ENCODE measurements at regions of chr11 and their contacts with region 1.

Region 1: DNA sequence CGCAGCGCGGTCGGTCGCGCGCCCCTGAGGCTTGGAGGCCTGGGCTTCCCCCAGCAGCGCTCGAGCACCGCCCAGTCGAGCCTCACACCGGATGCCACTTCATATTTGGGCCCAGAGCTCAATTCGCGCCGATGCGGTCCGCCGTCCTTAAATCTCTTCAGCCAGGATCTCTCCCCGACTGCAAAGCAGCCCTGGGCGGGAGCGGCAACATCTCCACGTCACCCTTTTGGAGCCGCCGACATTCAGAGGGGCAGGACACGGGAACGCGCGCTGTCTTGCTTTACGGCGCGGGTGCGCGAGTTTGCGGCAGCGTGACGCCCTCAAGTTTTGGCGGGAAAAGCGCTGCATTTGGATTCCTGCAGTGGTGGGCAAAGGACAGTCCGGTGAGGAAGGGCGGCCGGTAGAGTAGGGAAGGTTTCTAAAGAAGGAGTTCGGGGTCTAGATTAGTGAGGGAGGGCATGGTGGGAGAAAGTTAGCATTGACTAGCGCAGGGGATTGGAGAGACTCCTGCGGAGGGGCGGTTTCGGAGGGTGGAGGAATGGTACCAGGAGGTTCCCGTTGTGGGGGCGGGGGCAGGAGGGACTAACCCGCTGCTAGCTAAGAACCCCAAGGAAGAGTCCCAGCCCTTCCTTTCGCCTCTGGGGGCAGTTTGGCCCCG is 796 bp downstream of the CHEK1 start:
- DNase-seq: peak; percentile 77 to 97 (median 82)
- ATAC-seq: peak; percentile 89
- H3K4me3 ChIP-seq: peak overlapping the region; percentile 80
- H3K27ac ChIP-seq: peak overlapping the region; percentile 93
- H3K4me1 ChIP-seq: peaks cover 9 to 10% of the 10 kb centered on the region in 2 experiments
- H3K27me3 ChIP-seq: no peaks in the 10 kb centered on the region
- CTCF ChIP-seq: no peak
- EP300 ChIP-seq: no peak
- POLR2A ChIP-seq: peak; percentile 98
- RAD21 ChIP-seq: no peak

Region 2: DNA sequence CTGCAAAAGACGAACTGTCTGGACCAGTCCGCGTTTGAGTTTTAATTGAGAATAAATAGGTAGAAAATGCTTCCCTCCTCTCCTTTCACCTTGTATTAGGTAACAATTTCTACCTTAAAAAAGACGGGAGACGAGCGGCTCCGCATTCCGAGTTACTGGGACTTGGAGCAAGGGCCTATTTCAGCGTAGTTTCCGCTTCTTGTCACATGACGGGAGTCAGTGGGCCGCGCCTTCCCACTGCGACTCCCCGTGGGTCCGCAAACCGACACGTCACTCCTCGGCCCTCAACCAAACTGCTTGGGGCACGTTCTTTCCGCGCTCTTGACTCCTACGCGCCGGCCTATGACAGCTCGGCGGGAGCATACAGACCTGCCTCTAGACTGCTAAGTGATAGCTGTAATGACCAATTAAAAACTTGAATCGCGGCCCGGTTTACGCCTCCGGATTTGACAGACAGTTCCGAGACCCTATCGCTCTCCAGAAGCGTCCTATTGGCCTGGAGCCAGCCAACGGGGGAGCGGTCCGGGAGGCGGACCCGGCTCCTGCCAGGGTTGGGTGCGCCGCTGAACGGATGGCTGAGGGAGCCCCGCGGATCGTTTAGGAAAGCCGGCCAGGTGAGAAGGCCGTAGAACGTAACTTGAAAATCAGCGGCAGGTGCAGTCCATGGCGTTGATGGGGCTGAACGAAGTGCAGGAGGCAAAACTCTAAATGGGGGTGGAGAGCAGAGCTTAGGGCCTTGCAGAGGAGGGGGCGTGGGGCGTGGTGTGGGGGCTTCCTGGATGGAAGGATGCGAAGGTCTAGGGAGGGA is 33.2 kb before region 1 on chr11 and contains the start of gene STT3A:
- CTCF ChIA-PET with region 1: no interaction called
- POLR2A ChIA-PET with region 1: interaction called, 13 read pairs
- in situ Hi-C with region 1: no loop called
- intact Hi-C with region 1: loop called (anchors 5 kb)
- DNase-seq: peak; percentile 96 to 99 (median 98)
- ATAC-seq: peak; percentile 95
- H3K4me3 ChIP-seq: peak within 1 kb of the TSS; percentile 84
- H3K27ac ChIP-seq: peak within 1 kb of the TSS; percentile 96
- H3K4me1 ChIP-seq: peaks cover 23 to 25% of the 10 kb centered on the region in 2 experiments
- H3K27me3 ChIP-seq: no peaks in the 10 kb centered on the region
- CTCF ChIP-seq: no peak
- EP300 ChIP-seq: peak; percentile 49; the same call in 1 of the 2 replicates
- POLR2A ChIP-seq: peak; percentile 87
- RAD21 ChIP-seq: no peak
- polyA plus RNA-seq, gene STT3A: 197 to 330 TPM

Region 3: DNA sequence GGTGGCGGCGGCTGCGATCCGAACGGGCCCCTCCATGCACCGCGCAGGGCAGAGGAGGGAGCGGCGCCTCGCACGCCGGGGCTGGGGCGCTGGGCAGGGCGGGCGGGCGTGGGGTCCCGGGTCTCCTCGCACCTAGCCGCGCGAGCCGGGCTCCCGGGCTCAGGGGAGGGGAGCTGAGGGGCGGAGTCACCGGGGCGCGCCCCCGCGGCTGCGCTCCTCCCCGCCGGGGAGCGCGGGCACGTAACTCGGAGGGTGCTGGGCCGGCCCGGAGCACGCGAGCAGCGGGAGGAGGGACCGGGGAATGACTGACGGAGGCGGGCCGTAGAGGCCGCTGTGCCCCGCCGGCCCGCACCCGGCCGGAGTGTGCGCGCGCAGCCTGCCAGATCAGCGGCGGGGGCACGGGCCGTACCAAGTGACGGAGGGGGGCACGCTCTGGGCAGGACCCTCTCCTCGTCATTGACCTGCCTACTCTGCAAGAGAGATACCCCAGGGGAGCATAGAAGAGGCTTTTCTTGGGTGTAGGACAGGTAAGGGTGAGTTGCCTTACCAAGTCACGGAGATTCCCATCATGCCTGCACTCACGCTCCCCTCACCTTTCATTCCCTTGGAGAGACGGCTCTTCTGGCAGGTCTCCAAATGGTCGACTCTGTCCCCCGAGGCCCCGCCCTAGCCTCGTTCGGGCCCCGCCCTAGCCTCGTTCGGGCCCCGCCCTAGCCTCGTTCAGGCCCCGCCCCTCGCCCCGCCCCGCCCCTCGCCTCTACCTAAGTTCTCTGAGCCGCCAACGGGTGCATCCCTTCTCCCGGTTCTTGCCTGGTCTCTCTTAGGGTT is 437.1 kb after region 1 on chr11 and contains the start of gene CDON:
- CTCF ChIA-PET with region 1: no interaction called
- POLR2A ChIA-PET with region 1: no interaction called
- in situ Hi-C with region 1: no loop called
- intact Hi-C with region 1: no loop called
- DNase-seq: peak; percentile 92 to 99 (median 99)
- ATAC-seq: peak; percentile 99
- H3K4me3 ChIP-seq: peak within 1 kb of the TSS; percentile 43
- H3K27ac ChIP-seq: peak within 1 kb of the TSS; percentile 91
- H3K4me1 ChIP-seq: peaks cover 0 to 12% of the 10 kb centered on the region in 2 experiments; a peak in 2 of 5 replicates
- H3K27me3 ChIP-seq: peaks cover 8 to 21% of the 10 kb centered on the region in 2 experiments; a peak in 3 of 5 replicates
- CTCF ChIP-seq: 0 out of 6 replicates have a peak, but pooled peaks of 1 of the 3 experiments have one; percentile 22
- EP300 ChIP-seq: no peak
- POLR2A ChIP-seq: no peak
- RAD21 ChIP-seq: no peak
- polyA plus RNA-seq, gene CDON: 0.08 to 0.14 TPM